Mammary epithelial cell (primary cell): ENCODE measurements at regions of chr1 and their contacts with region 1.

Region 1: DNA sequence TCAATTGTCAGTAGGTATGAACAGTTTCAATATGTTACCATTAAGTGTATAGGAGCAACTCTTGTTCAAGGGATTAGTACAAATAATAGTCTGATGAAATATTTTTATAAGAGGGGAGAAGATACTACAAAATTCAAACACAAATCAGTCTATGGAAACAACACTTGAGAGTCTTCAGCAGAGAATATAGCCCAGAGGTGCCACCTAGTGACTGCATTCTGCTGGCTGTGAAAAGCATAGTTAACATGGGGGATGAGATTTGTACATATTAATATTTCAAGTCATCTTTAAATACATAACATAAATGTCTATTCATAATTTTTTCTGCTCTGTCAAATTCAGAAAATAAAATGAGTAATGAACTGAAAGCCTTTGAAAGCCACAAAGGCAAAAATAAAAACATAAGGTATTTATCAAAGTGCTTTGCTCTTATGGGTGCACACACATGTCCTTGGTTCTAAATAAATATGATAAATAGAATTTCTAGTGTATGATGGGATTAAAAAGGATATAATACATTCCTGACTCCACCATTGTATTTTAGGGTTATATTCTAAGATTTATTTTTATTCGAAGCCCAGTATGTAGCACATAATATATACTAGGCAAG is 440.9 kb upstream of the ZRANB2 start:
- DNase-seq: peak; percentile 12
- H3K4me3 ChIP-seq: no peak overlapping the region
- H3K27ac ChIP-seq: no peak overlapping the region
- H3K4me1 ChIP-seq: no peaks in the 10 kb centered on the region
- H3K27me3 ChIP-seq: peaks cover 4% of the 10 kb centered on the region
- CTCF ChIP-seq: peak; percentile 70 to 79

Region 2: DNA sequence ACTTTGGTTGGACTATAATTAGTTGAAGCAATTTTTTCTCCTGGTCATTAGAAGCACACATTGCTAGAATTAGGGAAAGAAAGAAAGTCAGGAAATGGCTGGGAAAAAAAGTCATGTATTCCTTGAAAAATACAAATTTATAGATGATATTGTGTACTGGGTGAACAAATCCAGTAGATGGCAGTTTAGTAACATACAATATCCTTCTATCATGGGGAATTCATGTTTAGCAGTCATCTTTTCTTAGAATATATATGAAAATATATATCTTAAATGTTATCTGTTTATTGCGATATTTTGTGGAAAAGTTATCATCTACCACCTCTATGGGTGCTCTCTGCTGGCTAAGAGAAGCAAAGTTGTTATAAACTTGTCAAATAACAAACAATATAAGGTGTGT is 427.8 kb before region 1 on chr1:
- CTCF ChIA-PET with region 1: no interaction called
- dilution Hi-C with region 1: no loop called
- in situ Hi-C with region 1: no loop called
- intact Hi-C with region 1: loop called (anchors 5 kb)
- DNase-seq: no peak
- H3K4me3 ChIP-seq: no peak overlapping the region
- H3K27ac ChIP-seq: no peak overlapping the region
- H3K4me1 ChIP-seq: peaks cover 9% of the 10 kb centered on the region
- H3K27me3 ChIP-seq: peaks cover 6% of the 10 kb centered on the region
- CTCF ChIP-seq: peak; percentile 19 to 49

Region 3: GRCh38 chr1:71196685-71197084 is 325.1 kb before region 1 on chr1:
- CTCF ChIA-PET with region 1: no interaction called
- dilution Hi-C with region 1: no loop called
- in situ Hi-C with region 1: loop called (anchors 10 to 25 kb)
- intact Hi-C with region 1: loop called (anchors 5 kb)
- DNase-seq: peak; percentile 11
- H3K4me3 ChIP-seq: no peak overlapping the region
- H3K27ac ChIP-seq: no peak overlapping the region
- H3K4me1 ChIP-seq: no peaks in the 10 kb centered on the region
- H3K27me3 ChIP-seq: peaks cover 2% of the 10 kb centered on the region
- CTCF ChIP-seq: peak; percentile 34 to 55

Region 4: GRCh38 chr1:71463144-71463543 is 58.6 kb before region 1 on chr1:
- CTCF ChIA-PET with region 1: no interaction called
- dilution Hi-C with region 1: loop called (anchors 10 kb)
- in situ Hi-C with region 1: no loop called
- intact Hi-C with region 1: no loop called
- DNase-seq: no peak
- H3K4me3 ChIP-seq: no peak overlapping the region
- H3K27ac ChIP-seq: no peak overlapping the region
- H3K4me1 ChIP-seq: no peaks in the 10 kb centered on the region
- H3K27me3 ChIP-seq: no peaks in the 10 kb centered on the region
- CTCF ChIP-seq: no peak